ENCODE measurements at regions of chr17 and their contacts with region 1.

Region 1: GRCh38 chr17:39270923-39271322 is 45.2 kb upstream of the STAC2 start:
- DNase-seq: no peak
- ATAC-seq: no peak

Region 2: GRCh38 chr17:39026980-39027451 is 243.9 kb before region 1 on chr17:
- intact Hi-C with region 1: no loop called
- DNase-seq: peak; percentile 89
- ATAC-seq: peak; percentile 95

Region 3: GRCh38 chr17:39219647-39220154 is 51.2 kb before region 1 on chr17:
- intact Hi-C with region 1: no loop called
- DNase-seq: peak; percentile 79
- ATAC-seq: peak; percentile 89

Region 4: GRCh38 chr17:39393736-39394135 is 122.8 kb after region 1 on chr17:
- intact Hi-C with region 1: loop called (anchors 10 kb)
- DNase-seq: no peak
- ATAC-seq: no peak

Measured in left ventricle myocardium superior (tissue), 1 donor.